ENCODE measurements at regions of chr15 and their contacts with region 1.

Region 1: DNA sequence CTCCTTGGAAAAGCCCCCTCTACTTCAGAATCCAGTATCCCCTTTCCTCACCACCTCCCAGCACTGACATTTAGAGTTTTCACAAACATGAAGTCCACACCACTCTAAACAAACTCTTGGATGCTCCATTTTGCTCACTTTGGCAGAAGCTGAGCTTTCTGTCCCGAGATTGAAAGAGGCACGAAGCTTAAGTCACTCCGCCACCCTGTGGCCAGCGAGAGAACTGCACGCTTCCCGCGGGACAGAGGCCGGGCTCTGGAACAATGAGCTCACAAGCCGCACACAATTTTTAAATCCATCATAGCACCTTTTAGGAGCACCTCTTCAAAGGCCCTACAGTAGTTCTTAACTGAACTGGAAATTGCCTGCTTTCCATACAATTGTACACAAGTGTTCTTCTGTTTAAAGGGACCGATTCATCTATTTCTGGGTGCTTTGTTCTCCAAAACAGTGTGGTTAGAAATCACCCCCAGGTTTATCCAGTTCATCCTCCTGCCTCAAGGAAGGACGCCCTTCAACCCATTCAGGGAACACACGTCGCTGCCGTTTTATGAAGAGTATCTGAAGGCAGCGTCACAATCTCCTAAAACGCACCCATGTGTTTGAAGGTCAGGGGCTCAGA is 226.1 kb downstream of the VPS13C start:
- H3K4me3 Mint-ChIP-seq: no peak overlapping the region
- H3K27ac Mint-ChIP-seq: no peak overlapping the region
- H3K4me1 Mint-ChIP-seq: peaks cover 19% of the 10 kb centered on the region
- H3K27me3 Mint-ChIP-seq: peaks cover 16% of the 10 kb centered on the region

Region 2: GRCh38 chr15:60585743-60586708 is 1248.2 kb before region 1 on chr15:
- intact Hi-C with region 1: loop called (anchors 5 kb)
- H3K4me3 Mint-ChIP-seq: no peak overlapping the region
- H3K27ac Mint-ChIP-seq: no peak overlapping the region
- H3K4me1 Mint-ChIP-seq: no peaks in the 10 kb centered on the region
- H3K27me3 Mint-ChIP-seq: peaks cover 39% of the 10 kb centered on the region

Region 3: GRCh38 chr15:61195116-61196002 is 638.8 kb before region 1 on chr15:
- intact Hi-C with region 1: loop called (anchors 2 kb)
- H3K4me3 Mint-ChIP-seq: no peak overlapping the region
- H3K27ac Mint-ChIP-seq: no peak overlapping the region
- H3K4me1 Mint-ChIP-seq: no peaks in the 10 kb centered on the region
- H3K27me3 Mint-ChIP-seq: no peaks in the 10 kb centered on the region

Region 4: GRCh38 chr15:61815356-61816083 is 18.7 kb before region 1 on chr15:
- intact Hi-C with region 1: no loop called
- H3K4me3 Mint-ChIP-seq: no peak overlapping the region
- H3K27ac Mint-ChIP-seq: no peak overlapping the region
- H3K4me1 Mint-ChIP-seq: no peaks in the 10 kb centered on the region
- H3K27me3 Mint-ChIP-seq: no peaks in the 10 kb centered on the region

Measured in dendritic cell treated with granulocyte-macrophage colony-stimulating factor and Interleukin-4, amounts not matched to agents 40 ng/mL and 50 ng/mL, for 4 days (primary cell).